Astrocyte of the cerebellum (primary cell): ENCODE measurements at regions of chr3 and their contacts with region 1.

Region 1: GRCh38 chr3:10964537-10965167 is 27.9 kb upstream of the SLC6A1 start:
- DNase-seq: no peak
- H3K4me3 ChIP-seq: no peak overlapping the region
- CTCF ChIP-seq: no peak

Region 2: DNA sequence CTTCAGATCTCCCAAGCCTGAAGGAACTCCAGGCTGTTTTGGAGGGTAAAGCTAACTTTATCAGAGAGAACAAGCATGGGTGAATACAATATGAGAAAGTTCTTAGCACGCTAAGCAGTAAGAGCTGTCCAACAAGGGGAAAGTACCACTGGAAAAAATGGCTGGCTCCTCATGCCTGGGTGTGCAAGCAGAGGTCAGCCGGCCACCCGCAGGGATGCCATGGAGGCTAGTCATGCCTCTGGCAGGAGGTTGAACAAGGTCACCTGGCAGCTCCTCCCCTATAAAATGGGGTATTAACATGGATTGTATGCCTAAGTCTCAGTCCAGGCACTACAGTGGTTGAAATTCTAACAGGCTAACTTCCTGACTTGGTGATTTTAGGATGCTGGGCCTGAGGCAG is 47.5 kb before region 1 on chr3:
- in situ Hi-C with region 1: no loop called
- DNase-seq: no peak
- H3K4me3 ChIP-seq: no peak overlapping the region
- CTCF ChIP-seq: no peak

Region 3: DNA sequence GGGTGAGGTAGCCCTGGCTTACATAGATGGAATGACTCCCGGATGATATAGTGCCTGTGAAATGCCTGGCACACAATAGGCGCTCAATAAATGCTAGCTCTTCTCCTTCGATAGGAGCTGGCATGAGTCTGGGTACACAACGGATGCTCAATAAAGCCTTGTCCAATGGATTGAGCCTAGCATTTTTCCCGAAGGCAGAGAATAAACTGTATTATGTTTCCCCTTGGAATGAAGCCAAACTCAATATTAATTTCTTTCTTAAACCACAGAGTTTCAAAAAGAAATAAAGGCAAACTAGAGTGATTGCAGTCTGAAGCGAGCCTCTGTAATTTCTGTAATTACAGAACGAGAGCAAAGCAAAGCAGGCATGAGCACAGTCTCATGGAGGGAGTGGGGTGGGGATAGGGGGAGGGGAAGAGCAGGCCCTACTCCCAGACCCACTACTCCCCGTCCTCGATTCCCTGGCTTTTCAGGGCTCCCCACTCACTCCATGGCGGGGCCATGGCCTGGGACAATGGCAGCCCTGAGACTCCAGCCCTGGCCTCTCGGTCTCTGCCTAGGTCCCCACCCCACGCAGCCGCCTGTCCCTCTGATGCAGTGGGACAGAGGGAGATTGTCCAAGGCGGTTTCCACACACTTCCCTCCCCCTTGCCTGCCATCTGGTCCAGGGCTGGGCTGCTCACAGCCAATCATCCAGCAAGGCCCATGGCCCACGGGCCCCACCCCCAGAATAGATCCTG is 45.9 kb after region 1 on chr3:
- in situ Hi-C with region 1: no loop called
- DNase-seq: no peak
- H3K4me3 ChIP-seq: no peak overlapping the region
- CTCF ChIP-seq: no peak

Region 4: DNA sequence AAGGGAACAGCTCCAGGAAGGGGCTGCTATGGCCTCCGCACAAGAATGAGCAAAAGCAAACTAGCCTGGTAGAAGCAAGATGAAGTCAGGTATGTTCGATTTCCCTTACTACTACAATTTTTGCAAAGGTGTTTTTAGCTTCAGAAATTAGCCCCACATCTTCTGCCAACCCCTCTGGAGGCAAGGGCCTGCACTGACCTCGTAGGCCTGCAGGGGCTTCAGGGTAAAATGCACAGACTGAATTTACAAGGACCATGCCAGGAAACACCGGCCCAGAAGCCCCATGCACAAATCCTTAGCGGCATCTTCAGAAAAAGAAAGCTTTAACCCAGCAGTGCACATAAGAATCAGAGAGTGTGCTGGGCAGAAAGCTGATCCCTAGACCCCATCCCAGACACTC is 80.9 kb after region 1 on chr3:
- in situ Hi-C with region 1: loop called (anchors 5 kb)
- DNase-seq: no peak
- H3K4me3 ChIP-seq: no peak overlapping the region
- CTCF ChIP-seq: no peak